ENCODE measurements at regions of chr17 and their contacts with region 1.

Region 1: DNA sequence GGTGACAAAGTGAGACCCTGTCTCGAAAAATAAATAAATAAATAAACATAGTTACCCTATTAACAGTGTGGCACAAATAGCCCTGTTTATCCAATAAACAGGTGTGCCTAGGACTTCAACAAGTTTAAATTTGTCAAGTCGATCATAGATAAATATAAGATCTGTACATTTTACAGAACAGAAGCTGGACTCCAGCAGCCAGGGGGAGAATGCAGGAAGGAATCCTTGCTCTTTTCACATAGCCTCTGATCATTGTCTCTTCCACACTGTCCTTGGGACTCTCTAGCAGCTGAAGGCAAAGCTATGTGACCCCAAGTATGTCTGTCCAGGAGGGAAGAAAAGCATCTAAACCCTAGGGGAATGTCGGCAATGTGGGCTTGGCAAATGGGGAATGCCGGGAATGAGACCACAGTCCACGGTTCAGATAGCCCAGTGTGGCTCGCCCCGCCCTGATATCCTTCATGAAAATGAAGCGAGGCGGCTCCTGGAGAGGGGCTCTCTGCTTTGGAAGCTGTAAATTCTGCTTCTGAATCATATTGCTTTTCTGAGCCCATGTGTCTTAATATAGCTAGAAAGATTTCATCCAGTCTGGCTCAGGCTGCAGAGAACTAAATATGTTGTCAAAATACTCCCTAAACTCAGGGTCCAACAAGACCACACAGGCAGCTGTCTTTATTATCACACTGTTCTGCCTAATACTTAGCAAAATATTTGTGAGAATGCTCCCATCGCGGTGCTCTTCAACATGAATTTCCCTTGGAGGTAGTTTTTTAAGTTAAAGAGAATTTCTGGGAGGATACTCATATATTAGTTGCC is 24.9 kb upstream of the GRB2 start:
- DNase-seq: peak in 2 of 4 experiments; percentile 12 to 20
- ATAC-seq: peak; percentile 32; the same call in 1 of the 3 replicates
- H3K4me3 ChIP-seq: no peak overlapping the region
- H3K27ac ChIP-seq: no peak overlapping the region
- H3K4me1 ChIP-seq: peaks cover 0 to 9% of the 10 kb centered on the region in 2 experiments; a peak in 4 of 5 replicates
- H3K27me3 ChIP-seq: peaks cover 6 to 7% of the 10 kb centered on the region in 2 experiments; a peak in 4 of 5 replicates
- CTCF ChIP-seq: no peak
- EP300 ChIP-seq: no peak
- POLR2A ChIP-seq: no peak
- RAD21 ChIP-seq: no peak

Region 2: GRCh38 chr17:75250009-75250471 is 180.3 kb before region 1 on chr17:
- CTCF ChIA-PET with region 1: no interaction called
- POLR2A ChIA-PET with region 1: no interaction called
- in situ Hi-C with region 1: no loop called
- intact Hi-C with region 1: no loop called
- DNase-seq: peak in 1 of 4 experiments; percentile 23
- ATAC-seq: peak; percentile 45; the same call in 2 of the 3 replicates
- H3K4me3 ChIP-seq: no peak overlapping the region
- H3K27ac ChIP-seq: no peak overlapping the region
- H3K4me1 ChIP-seq: peaks cover 5 to 22% of the 10 kb centered on the region in 2 experiments; a peak in 4 of 5 replicates
- H3K27me3 ChIP-seq: no peaks in the 10 kb centered on the region
- CTCF ChIP-seq: no peak
- EP300 ChIP-seq: no peak
- POLR2A ChIP-seq: no peak
- RAD21 ChIP-seq: no peak

Region 3: GRCh38 chr17:75487351-75488070 is 57.1 kb after region 1 on chr17:
- CTCF ChIA-PET with region 1: interaction called, 20 read pairs
- POLR2A ChIA-PET with region 1: interaction called, 4 read pairs
- in situ Hi-C with region 1: no loop called
- intact Hi-C with region 1: loop called (anchors 2 kb)
- DNase-seq: peak; percentile 52 to 68 (median 60)
- ATAC-seq: peak; percentile 86
- H3K4me3 ChIP-seq: no peak overlapping the region
- H3K27ac ChIP-seq: peak overlapping the region; percentile 52; the same call in 2 of the 3 replicates
- H3K4me1 ChIP-seq: peaks cover 11 to 31% of the 10 kb centered on the region in 2 experiments; a peak in 4 of 5 replicates
- H3K27me3 ChIP-seq: no peaks in the 10 kb centered on the region
- CTCF ChIP-seq: peak; percentile 56 to 72 (median 60)
- EP300 ChIP-seq: no peak
- POLR2A ChIP-seq: no peak
- RAD21 ChIP-seq: peak; percentile 78 to 81

Region 4: GRCh38 chr17:75498726-75499213 is 68.4 kb after region 1 on chr17:
- CTCF ChIA-PET with region 1: no interaction called
- POLR2A ChIA-PET with region 1: no interaction called
- in situ Hi-C with region 1: loop called (anchors 5 kb)
- intact Hi-C with region 1: no loop called
- DNase-seq: peak; percentile 42 to 68 (median 56)
- ATAC-seq: peak; percentile 70
- H3K4me3 ChIP-seq: no peak overlapping the region
- H3K27ac ChIP-seq: no peak overlapping the region
- H3K4me1 ChIP-seq: peaks cover 0 to 56% of the 10 kb centered on the region in 2 experiments; a peak in 2 of 5 replicates
- H3K27me3 ChIP-seq: no peaks in the 10 kb centered on the region
- CTCF ChIP-seq: peak; percentile 23 to 42 (median 24); a peak in 3 of 6 replicates
- EP300 ChIP-seq: no peak
- POLR2A ChIP-seq: no peak
- RAD21 ChIP-seq: peak in 1 of 2 experiments; percentile 45; a peak in 1 of 4 replicates

Region 5: DNA sequence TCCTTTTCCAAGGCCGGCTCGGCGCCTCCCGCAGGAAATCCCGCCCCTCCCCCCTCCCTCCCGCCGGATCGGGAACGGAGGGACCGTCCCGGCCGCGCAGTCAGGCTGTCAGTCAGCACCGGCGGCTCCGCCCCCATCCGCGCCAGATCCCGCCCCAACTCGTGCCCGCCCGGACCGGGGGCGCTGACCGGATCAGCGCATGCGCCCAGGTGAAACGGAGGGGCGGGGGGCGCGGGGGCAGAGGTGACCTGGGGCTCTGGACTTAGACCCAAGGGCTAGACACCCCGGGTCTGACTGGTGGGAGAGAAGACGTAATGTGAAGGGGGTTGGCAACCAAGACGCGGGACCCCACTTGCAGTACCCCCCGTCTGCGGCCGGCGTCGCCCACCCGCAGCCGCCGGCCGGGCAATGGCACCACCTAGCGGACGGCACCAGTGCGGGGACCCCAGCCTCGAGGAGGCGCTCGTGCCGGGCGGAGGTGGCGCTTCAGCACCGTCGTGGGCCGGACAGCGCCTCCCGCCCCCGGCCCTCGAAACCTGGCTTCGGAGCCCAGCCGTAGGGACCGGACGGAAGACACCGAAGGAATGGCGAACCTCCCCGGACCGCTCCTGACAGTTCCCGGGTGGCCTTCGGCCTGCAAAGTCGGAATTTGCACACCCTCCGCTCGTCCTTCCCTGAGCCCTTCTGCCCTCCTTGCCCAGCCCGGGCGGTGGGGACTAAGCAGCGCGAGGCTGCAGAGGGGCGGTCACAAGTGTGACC is 85.3 kb after region 1 on chr17 and contains the start of gene CASKIN2:
- CTCF ChIA-PET with region 1: interaction called, 17 read pairs
- POLR2A ChIA-PET with region 1: no interaction called
- in situ Hi-C with region 1: no loop called
- intact Hi-C with region 1: loop called (anchors 1 kb)
- DNase-seq: peak; percentile 92 to 99 (median 96)
- ATAC-seq: peak; percentile 82
- H3K4me3 ChIP-seq: peak within 1 kb of the TSS; percentile 91
- H3K27ac ChIP-seq: peak within 1 kb of the TSS; percentile 14; the same call in 2 of the 3 replicates
- H3K4me1 ChIP-seq: peaks cover 34 to 64% of the 10 kb centered on the region in 2 experiments
- H3K27me3 ChIP-seq: no peaks in the 10 kb centered on the region
- CTCF ChIP-seq: peak; percentile 97 to 100 (median 100)
- EP300 ChIP-seq: no peak
- POLR2A ChIP-seq: no peak
- RAD21 ChIP-seq: peak; percentile 86 to 90
- polyA plus RNA-seq, gene CASKIN2: 0.01 to 0.04 TPM

Region 6: GRCh38 chr17:75589012-75589918 is 158.9 kb after region 1 on chr17:
- CTCF ChIA-PET with region 1: interaction called, 3 read pairs
- POLR2A ChIA-PET with region 1: no interaction called
- in situ Hi-C with region 1: no loop called
- intact Hi-C with region 1: loop called (anchors 10 kb)
- DNase-seq: peak; percentile 94 to 99 (median 99)
- ATAC-seq: peak; percentile 95
- H3K4me3 ChIP-seq: peak overlapping the region; percentile 53
- H3K27ac ChIP-seq: peak overlapping the region; percentile 69
- H3K4me1 ChIP-seq: peaks cover 6 to 36% of the 10 kb centered on the region in 2 experiments; a peak in 3 of 5 replicates
- H3K27me3 ChIP-seq: peaks cover 0 to 4% of the 10 kb centered on the region in 2 experiments; a peak in 1 of 5 replicates
- CTCF ChIP-seq: peak; percentile 27 to 87 (median 62); a peak in 4 of 6 replicates
- EP300 ChIP-seq: no peak
- POLR2A ChIP-seq: no peak
- RAD21 ChIP-seq: peak in 1 of 2 experiments; percentile 31; a peak in 2 of 4 replicates

Region 7: DNA sequence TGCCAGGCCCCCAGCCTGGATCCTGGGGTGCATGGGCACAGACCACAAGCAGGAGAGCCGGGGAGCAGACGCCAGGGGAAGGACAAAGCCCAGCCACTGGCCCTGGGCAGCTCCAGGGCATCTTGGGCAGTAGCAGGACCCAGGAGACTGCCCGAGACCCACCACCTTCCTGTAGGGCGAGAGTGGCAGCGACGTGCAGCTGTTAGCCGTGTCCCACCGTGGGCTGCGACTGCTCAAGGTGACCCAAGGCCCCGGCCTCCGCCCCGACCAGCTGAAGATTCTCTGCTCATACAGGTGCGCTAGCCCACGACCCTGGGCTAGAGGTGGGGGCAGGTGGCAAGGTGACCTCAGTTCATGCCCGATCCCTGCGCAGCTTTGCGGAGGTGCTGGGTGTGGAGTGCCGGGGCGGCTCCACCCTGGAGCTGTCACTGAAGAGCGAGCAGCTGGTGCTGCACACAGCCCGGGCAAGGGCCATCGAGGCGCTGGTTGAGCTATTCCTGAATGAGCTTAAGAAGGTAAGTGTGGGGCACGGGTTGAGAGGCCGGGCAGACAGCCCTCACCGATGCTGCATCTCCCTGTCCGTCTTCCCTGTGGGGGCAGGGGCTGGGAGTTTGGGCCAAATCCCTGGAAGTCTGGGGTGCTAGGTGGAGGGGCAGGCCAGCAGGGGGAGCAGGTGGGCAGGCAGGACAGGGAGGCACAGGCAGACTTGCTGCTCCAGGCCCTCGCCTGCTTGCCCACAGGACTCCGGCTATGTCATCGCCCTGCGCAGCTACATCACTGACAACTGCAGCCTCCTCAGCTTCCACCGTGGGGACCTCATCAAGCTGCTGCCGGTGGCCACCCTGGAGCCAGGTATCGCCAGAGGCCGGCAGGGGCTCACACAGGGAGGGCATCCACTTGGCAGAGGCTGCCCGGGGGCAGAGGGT is 189.4 kb after region 1 on chr17:
- CTCF ChIA-PET with region 1: interaction called, 3 read pairs
- POLR2A ChIA-PET with region 1: no interaction called
- in situ Hi-C with region 1: no loop called
- intact Hi-C with region 1: loop called (anchors 10 kb)
- DNase-seq: peak; percentile 67 to 81 (median 75)
- ATAC-seq: peak; percentile 71
- H3K4me3 ChIP-seq: no peak overlapping the region
- H3K27ac ChIP-seq: no peak overlapping the region
- H3K4me1 ChIP-seq: peaks cover 0 to 74% of the 10 kb centered on the region in 2 experiments; a peak in 3 of 5 replicates
- H3K27me3 ChIP-seq: peaks cover 4 to 61% of the 10 kb centered on the region in 2 experiments; a peak in 3 of 5 replicates
- CTCF ChIP-seq: peak; percentile 65 to 79 (median 74)
- EP300 ChIP-seq: no peak
- POLR2A ChIP-seq: no peak
- RAD21 ChIP-seq: peak in 1 of 2 experiments; percentile 58; a peak in 2 of 4 replicates

Region 8: GRCh38 chr17:75731716-75732498 is 301.5 kb after region 1 on chr17:
- CTCF ChIA-PET with region 1: no interaction called
- POLR2A ChIA-PET with region 1: no interaction called
- in situ Hi-C with region 1: no loop called
- intact Hi-C with region 1: no loop called
- DNase-seq: no peak
- ATAC-seq: no peak
- H3K4me3 ChIP-seq: no peak overlapping the region
- H3K27ac ChIP-seq: no peak overlapping the region
- H3K4me1 ChIP-seq: peaks cover 0 to 43% of the 10 kb centered on the region in 2 experiments; a peak in 2 of 5 replicates
- H3K27me3 ChIP-seq: peaks cover 9 to 36% of the 10 kb centered on the region in 2 experiments; a peak in 4 of 5 replicates
- CTCF ChIP-seq: no peak
- EP300 ChIP-seq: no peak
- POLR2A ChIP-seq: no peak
- RAD21 ChIP-seq: no peak